Activated B cell treated with CpG ODN at 0.5 μM for 24 hours (primary cell): ENCODE measurements at regions of chr11 and their contacts with region 1.

Region 1: GRCh38 chr11:66842896-66843775 is at the start of gene RCE1:
- DNase-seq: peak; percentile 93
- ATAC-seq: peak; percentile 91
- H3K4me3 Mint-ChIP-seq: peak within 1 kb of the TSS; percentile 92
- H3K27ac Mint-ChIP-seq: peak within 1 kb of the TSS; percentile 90
- H3K4me1 Mint-ChIP-seq: peaks cover 45% of the 10 kb centered on the region
- H3K27me3 Mint-ChIP-seq: no peaks in the 10 kb centered on the region
- CTCF ChIP-seq: no peak
- total RNA-seq, gene RCE1: 20.1 and 21.4 TPM in 2 replicates

Region 2: GRCh38 chr11:66051766-66052663 is 791.1 kb before region 1 on chr11 and contains the start of gene SF3B2:
- CTCF ChIA-PET with region 1: no interaction called
- POLR2A ChIA-PET with region 1: no interaction called
- intact Hi-C with region 1: loop called (anchors 2 kb)
- DNase-seq: peak; percentile 91
- ATAC-seq: peak; percentile 97
- H3K4me3 Mint-ChIP-seq: peak within 1 kb of the TSS; percentile 99
- H3K27ac Mint-ChIP-seq: peak within 1 kb of the TSS; percentile 96
- H3K4me1 Mint-ChIP-seq: peaks cover 27% of the 10 kb centered on the region
- H3K27me3 Mint-ChIP-seq: peaks cover 8% of the 10 kb centered on the region
- CTCF ChIP-seq: no peak
- total RNA-seq, gene SF3B2: 198 and 219 TPM in 2 replicates

Region 3: DNA sequence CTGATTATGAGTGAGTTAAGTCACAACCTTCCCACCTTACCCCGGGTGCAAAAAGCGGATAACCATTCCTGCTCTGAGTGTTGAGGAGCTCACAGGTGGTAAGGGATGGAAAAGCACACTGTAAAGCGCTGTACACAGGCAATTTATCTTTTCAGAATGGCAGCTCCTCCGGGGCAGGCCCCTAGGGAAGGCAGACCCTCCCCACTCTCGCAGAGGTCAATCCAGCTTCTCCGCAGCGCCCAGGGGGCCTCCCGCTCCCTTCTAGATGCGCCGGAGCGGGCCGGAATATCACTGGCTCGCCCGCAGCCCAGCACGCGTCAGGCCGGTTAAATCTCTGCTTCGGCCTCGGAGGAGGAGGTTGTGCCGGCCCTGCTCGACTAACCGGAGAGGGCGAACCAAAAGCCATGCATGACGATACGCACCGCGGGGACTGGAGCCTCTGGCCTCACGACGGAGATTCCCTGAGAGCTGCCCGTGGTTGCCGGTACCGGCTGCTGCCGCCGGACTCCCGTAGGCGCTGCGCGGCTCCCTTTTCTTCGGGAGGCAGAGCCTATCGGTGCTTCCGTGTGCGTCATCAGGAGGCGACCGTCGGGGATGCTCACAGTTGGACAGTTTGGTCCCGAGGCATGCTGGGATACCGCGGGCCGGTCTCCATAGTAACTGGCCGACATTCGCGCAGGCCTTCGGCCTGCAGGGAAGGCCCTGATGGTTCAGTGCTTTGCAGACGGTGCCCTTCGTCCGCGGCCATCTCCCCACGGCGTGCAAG is 498.4 kb before region 1 on chr11 and contains the start of gene BRMS1:
- CTCF ChIA-PET with region 1: no interaction called
- POLR2A ChIA-PET with region 1: interaction called, 3 read pairs
- intact Hi-C with region 1: loop called (anchors 1 kb)
- DNase-seq: peak; percentile 93
- ATAC-seq: peak; percentile 82
- H3K4me3 Mint-ChIP-seq: peak within 1 kb of the TSS; percentile 96
- H3K27ac Mint-ChIP-seq: peak within 1 kb of the TSS; percentile 93
- H3K4me1 Mint-ChIP-seq: peaks cover 45% of the 10 kb centered on the region
- H3K27me3 Mint-ChIP-seq: peaks cover 2% of the 10 kb centered on the region
- CTCF ChIP-seq: no peak
- total RNA-seq, gene BRMS1: 56.9 and 59.2 TPM in 2 replicates

Region 4: GRCh38 chr11:66454249-66454648 is 388.9 kb before region 1 on chr11:
- CTCF ChIA-PET with region 1: no interaction called
- POLR2A ChIA-PET with region 1: no interaction called
- intact Hi-C with region 1: no loop called
- DNase-seq: no peak
- ATAC-seq: no peak
- H3K4me3 Mint-ChIP-seq: no peak overlapping the region
- H3K27ac Mint-ChIP-seq: no peak overlapping the region
- H3K4me1 Mint-ChIP-seq: peaks cover 31% of the 10 kb centered on the region
- H3K27me3 Mint-ChIP-seq: peaks cover 11% of the 10 kb centered on the region
- CTCF ChIP-seq: no peak

Region 5: GRCh38 chr11:66545701-66546367 is 297.3 kb before region 1 on chr11 and contains the start of gene ZDHHC24:
- CTCF ChIA-PET with region 1: no interaction called
- POLR2A ChIA-PET with region 1: interaction called, 13 read pairs
- intact Hi-C with region 1: loop called (anchors 10 kb)
- DNase-seq: peak; percentile 86
- ATAC-seq: peak; percentile 85
- H3K4me3 Mint-ChIP-seq: peak within 1 kb of the TSS; percentile 77
- H3K27ac Mint-ChIP-seq: peak within 1 kb of the TSS; percentile 57
- H3K4me1 Mint-ChIP-seq: peaks cover 35% of the 10 kb centered on the region
- H3K27me3 Mint-ChIP-seq: no peaks in the 10 kb centered on the region
- CTCF ChIP-seq: no peak
- total RNA-seq, gene ZDHHC24: 14.6 and 19.0 TPM in 2 replicates

Region 6: DNA sequence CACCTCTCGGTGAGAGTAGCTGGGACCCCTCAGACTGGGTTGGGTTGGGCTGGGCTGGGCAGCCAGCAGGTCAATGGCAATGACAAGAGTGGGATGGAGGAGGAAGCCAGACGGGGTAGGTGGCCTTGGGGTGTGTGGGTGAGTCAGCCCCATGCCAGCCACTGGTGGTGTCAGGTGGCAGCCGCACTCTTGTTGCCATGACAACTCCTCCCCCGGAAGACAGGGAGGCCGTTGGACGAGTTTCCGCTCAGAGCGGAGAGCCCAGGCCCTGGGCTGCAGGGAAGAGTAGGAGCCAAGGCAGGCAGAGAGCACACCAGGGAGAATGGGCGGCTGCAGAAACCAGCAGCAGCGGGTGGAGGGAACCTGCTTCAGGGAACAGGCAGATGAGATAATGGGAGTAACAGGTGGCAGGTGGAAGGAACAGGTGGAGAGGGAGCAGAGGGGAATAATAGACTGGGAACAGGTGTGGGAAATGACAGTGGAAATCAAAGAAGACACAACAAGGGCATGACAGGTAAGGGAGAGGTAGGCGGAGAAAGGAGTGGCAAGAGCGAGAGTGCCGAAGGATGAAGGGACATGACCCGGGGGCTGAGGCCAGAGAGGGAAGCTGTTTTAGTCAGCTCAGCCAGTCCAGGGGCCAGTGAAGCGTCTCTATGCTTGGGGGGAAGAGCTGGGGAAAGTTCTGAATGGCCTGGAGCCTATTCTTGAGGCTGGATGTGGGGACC is 122.8 kb before region 1 on chr11:
- CTCF ChIA-PET with region 1: no interaction called
- POLR2A ChIA-PET with region 1: no interaction called
- intact Hi-C with region 1: no loop called
- DNase-seq: no peak
- ATAC-seq: no peak
- H3K4me3 Mint-ChIP-seq: no peak overlapping the region
- H3K27ac Mint-ChIP-seq: no peak overlapping the region
- H3K4me1 Mint-ChIP-seq: no peaks in the 10 kb centered on the region
- H3K27me3 Mint-ChIP-seq: peaks cover 17% of the 10 kb centered on the region
- CTCF ChIP-seq: no peak

Region 7: DNA sequence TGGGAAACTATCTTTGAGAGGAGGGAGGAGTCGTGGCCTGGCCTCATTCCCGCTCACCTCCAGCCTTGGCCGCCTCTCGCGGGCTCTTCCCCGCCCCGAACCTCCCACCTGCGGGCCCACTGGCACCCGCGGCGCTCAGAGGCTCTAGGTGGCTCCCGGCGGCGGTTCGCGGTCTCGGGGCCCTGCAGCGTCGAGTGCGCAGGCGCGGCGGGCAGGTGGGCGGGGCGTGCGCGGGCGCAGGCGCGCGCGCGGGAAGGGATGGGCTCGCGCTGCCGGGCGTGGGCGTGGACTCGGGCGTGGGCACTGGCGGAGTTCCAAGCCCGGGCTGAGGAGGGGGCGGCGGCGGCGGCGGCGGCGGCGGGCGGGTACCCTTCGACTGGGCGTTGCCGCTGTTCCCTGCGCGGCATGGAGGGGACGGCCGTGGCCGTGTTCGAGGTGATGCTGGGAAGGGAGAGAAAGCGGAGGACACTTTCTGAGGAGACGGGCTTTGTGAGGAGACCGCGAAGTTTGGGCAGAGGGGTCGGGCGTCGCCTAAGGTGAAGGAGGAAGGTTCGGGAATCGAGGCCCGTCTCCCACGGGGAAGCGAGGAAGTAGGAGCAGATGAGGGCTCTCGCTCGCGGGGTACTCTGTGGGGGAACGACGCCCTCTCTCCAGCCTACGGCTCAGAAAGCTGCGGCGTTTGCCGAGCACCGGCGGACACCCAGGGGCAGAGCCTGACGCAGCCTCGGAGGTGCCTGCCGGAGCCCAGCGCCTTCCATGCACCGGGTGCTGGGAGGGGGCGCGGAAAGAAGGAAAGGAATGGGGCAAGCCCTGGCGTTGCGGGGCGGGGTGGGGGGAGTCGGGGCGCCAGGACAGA is 98.4 kb before region 1 on chr11:
- CTCF ChIA-PET with region 1: no interaction called
- POLR2A ChIA-PET with region 1: interaction called, 10 read pairs
- intact Hi-C with region 1: no loop called
- DNase-seq: peak; percentile 95
- ATAC-seq: peak; percentile 90
- H3K4me3 Mint-ChIP-seq: peak overlapping the region; percentile 96
- H3K27ac Mint-ChIP-seq: peak overlapping the region; percentile 89
- H3K4me1 Mint-ChIP-seq: peaks cover 26% of the 10 kb centered on the region
- H3K27me3 Mint-ChIP-seq: no peaks in the 10 kb centered on the region
- CTCF ChIP-seq: no peak

Region 8: GRCh38 chr11:66855574-66856495 is 12.7 kb after region 1 on chr11:
- CTCF ChIA-PET with region 1: no interaction called
- POLR2A ChIA-PET with region 1: interaction called, 123 read pairs
- intact Hi-C with region 1: loop called (anchors 1 kb)
- DNase-seq: no peak
- ATAC-seq: peak; percentile 86
- H3K4me3 Mint-ChIP-seq: peak overlapping the region; percentile 86
- H3K27ac Mint-ChIP-seq: peak overlapping the region; percentile 76
- H3K4me1 Mint-ChIP-seq: peaks cover 16% of the 10 kb centered on the region
- H3K27me3 Mint-ChIP-seq: no peaks in the 10 kb centered on the region
- CTCF ChIP-seq: no peak

Region 9: DNA sequence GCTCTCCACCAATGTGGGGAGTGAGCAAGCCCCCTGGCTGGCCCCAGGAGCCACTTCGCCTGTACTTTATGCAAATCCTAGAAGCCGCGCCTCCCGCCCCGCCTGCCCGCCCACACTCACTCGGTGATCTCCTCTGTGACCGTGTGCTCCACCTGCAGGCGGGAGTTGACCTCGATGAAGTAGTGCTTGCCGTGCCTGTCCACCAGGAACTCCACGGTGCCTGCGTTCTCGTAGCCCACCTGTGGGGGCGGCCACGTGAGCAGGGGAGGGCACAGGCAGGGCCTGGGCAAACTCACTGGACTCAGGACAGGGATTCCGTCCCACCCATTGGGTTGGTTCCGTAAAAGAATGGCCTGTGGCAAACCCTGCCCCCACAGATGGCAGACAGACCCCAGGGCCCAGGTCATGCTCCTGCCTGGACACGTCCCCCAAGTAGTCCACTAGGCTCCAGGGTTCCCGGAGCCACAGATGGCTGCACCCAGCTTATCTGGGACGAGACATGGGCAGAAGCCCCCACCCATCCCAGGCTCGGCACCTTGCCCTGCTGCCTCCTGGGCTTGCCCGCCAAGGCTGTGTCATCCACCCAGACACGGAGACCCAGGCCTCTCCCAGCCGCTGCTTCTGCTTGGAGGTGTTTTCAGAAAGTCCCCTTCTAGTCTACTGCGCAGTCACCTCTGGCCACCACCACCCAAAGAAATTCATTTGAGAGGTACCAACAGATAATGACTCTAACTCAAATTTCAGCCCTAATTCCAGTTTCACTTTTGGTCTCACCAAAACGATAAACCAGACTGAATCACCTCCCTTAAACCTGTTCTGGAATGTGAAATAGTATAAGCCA is 25.8 kb after region 1 on chr11:
- CTCF ChIA-PET with region 1: interaction called, 4 read pairs
- POLR2A ChIA-PET with region 1: interaction called, 6 read pairs
- intact Hi-C with region 1: loop called (anchors 1 kb)
- DNase-seq: peak; percentile 70
- ATAC-seq: peak; percentile 99
- H3K4me3 Mint-ChIP-seq: no peak overlapping the region
- H3K27ac Mint-ChIP-seq: no peak overlapping the region
- H3K4me1 Mint-ChIP-seq: peaks cover 16% of the 10 kb centered on the region
- H3K27me3 Mint-ChIP-seq: no peaks in the 10 kb centered on the region
- CTCF ChIP-seq: no peak